ENCODE measurements at regions of chr15 and their contacts with region 1.

Region 1: GRCh38 chr15:51658670-51659069 is 22.6 kb upstream of the SCG3 start:
- DNase-seq: no peak
- ATAC-seq: no peak
- H3K4me3 ChIP-seq: no peak overlapping the region
- H3K4me3 Mint-ChIP-seq: no peak overlapping the region
- H3K27ac ChIP-seq: no peak overlapping the region
- H3K27ac Mint-ChIP-seq: no peak overlapping the region
- H3K4me1 ChIP-seq: no peaks in the 10 kb centered on the region
- H3K4me1 Mint-ChIP-seq: no peaks in the 10 kb centered on the region
- H3K27me3 ChIP-seq: no peaks in the 10 kb centered on the region
- H3K27me3 Mint-ChIP-seq: peaks cover 4% of the 10 kb centered on the region
- CTCF ChIP-seq: no peak

Region 2: GRCh38 chr15:51499379-51499976 is 159.2 kb before region 1 on chr15:
- CTCF ChIA-PET with region 1: no interaction called
- POLR2A ChIA-PET with region 1: no interaction called
- intact Hi-C with region 1: no loop called
- DNase-seq: peak in 1 of 14 experiments; percentile 5
- ATAC-seq: no peak
- H3K4me3 ChIP-seq: no peak overlapping the region
- H3K4me3 Mint-ChIP-seq: no peak overlapping the region
- H3K27ac ChIP-seq: no peak overlapping the region
- H3K27ac Mint-ChIP-seq: no peak overlapping the region
- H3K4me1 ChIP-seq: no peaks in the 10 kb centered on the region
- H3K4me1 Mint-ChIP-seq: no peaks in the 10 kb centered on the region
- H3K27me3 ChIP-seq: no peaks in the 10 kb centered on the region
- H3K27me3 Mint-ChIP-seq: no peaks in the 10 kb centered on the region
- CTCF ChIP-seq: no peak

Region 3: GRCh38 chr15:51714162-51714561 is 55.5 kb after region 1 on chr15:
- CTCF ChIA-PET with region 1: no interaction called
- POLR2A ChIA-PET with region 1: no interaction called
- intact Hi-C with region 1: loop called in 1 of 2 experiments (anchors 5 kb)
- DNase-seq: no peak
- ATAC-seq: no peak
- H3K4me3 ChIP-seq: no peak overlapping the region
- H3K4me3 Mint-ChIP-seq: no peak overlapping the region
- H3K27ac ChIP-seq: no peak overlapping the region
- H3K27ac Mint-ChIP-seq: no peak overlapping the region
- H3K4me1 ChIP-seq: no peaks in the 10 kb centered on the region
- H3K4me1 Mint-ChIP-seq: no peaks in the 10 kb centered on the region
- H3K27me3 ChIP-seq: no peaks in the 10 kb centered on the region
- H3K27me3 Mint-ChIP-seq: no peaks in the 10 kb centered on the region
- CTCF ChIP-seq: no peak

Region 4: DNA sequence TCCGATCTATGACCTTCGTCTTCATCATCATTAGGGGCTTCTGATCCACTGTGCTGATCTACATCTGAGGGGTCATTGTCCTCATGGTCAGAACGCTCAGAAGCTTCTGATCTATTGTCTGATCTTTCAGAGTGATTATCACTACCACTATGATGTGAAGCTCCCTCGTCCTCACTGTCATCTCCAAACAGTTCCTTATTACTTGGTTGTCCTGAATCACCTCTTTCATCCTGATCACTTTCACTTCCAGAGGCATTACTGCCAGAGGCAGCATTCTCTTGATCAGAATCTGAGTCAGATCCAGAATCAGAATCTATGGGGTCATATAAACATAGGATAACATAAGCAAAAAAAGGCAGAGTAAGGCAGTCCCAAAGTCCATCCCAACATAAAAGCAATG is 307.5 kb after region 1 on chr15:
- CTCF ChIA-PET with region 1: no interaction called
- POLR2A ChIA-PET with region 1: no interaction called
- intact Hi-C with region 1: no loop called
- DNase-seq: no peak
- ATAC-seq: no peak
- H3K4me3 ChIP-seq: no peak overlapping the region
- H3K4me3 Mint-ChIP-seq: no peak overlapping the region
- H3K27ac ChIP-seq: no peak overlapping the region
- H3K27ac Mint-ChIP-seq: no peak overlapping the region
- H3K4me1 ChIP-seq: peaks cover 12% of the 10 kb centered on the region
- H3K4me1 Mint-ChIP-seq: peaks cover 50% of the 10 kb centered on the region
- H3K27me3 ChIP-seq: no peaks in the 10 kb centered on the region
- H3K27me3 Mint-ChIP-seq: no peaks in the 10 kb centered on the region
- CTCF ChIP-seq: no peak

Measured in CD4-positive, alpha-beta T cell (primary cell).